Mammary epithelial cell (primary cell): ENCODE measurements at regions of chr7 and their contacts with region 1.

Region 1: GRCh38 chr7:96414931-96415292 is 93.0 kb upstream of the SLC25A13 start:
- DNase-seq: peak; percentile 18
- H3K4me3 ChIP-seq: no peak overlapping the region
- H3K27ac ChIP-seq: no peak overlapping the region
- H3K4me1 ChIP-seq: no peaks in the 10 kb centered on the region
- H3K27me3 ChIP-seq: no peaks in the 10 kb centered on the region
- CTCF ChIP-seq: peak; percentile 92 to 99

Region 2: DNA sequence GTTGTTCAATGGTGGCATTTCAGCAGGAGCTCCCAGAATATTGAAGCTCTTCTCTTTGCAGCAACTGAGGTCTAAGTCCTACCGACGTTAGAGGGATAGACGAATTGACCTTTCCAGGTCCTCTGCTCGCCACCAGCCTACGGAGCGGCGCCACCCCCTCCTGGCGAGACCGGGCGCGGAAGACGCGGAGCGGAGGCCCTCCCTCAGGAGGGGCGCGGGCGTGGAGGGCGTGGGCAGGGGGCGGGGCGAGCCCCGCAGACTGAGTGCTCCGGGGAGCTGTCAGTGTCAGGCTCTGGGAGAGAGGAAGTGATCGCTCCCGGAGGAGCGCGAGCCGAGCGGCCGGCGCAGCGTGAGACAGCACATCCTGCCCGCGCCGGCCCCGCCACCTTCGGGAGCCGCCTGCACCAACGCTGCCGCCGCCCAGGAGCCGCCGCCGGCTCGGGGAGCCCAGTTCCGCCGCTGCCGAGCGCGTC is 642.6 kb before region 1 on chr7 and contains the start of gene DYNC1I1:
- CTCF ChIA-PET with region 1: no interaction called
- dilution Hi-C with region 1: no loop called
- in situ Hi-C with region 1: no loop called
- intact Hi-C with region 1: no loop called
- DNase-seq: peak; percentile 73
- H3K4me3 ChIP-seq: peak within 1 kb of the TSS; percentile 42 to 59 (median 47)
- H3K27ac ChIP-seq: no peak within 1 kb of the TSS
- H3K4me1 ChIP-seq: no peaks in the 10 kb centered on the region
- H3K27me3 ChIP-seq: no peaks in the 10 kb centered on the region
- CTCF ChIP-seq: no peak
- total RNA-seq, gene DYNC1I1: 0.56 to 1.8 TPM

Region 3: GRCh38 chr7:96075510-96076349 is 339.2 kb before region 1 on chr7:
- CTCF ChIA-PET with region 1: no interaction called
- dilution Hi-C with region 1: no loop called
- in situ Hi-C with region 1: no loop called
- intact Hi-C with region 1: loop called (anchors 2 kb)
- DNase-seq: peak; percentile 26
- H3K4me3 ChIP-seq: peak overlapping the region; percentile 50 to 74 (median 61)
- H3K27ac ChIP-seq: no peak overlapping the region
- H3K4me1 ChIP-seq: peaks cover 12% of the 10 kb centered on the region
- H3K27me3 ChIP-seq: no peaks in the 10 kb centered on the region
- CTCF ChIP-seq: peak; percentile 79 to 91

Region 4: GRCh38 chr7:96179837-96180236 is 235.1 kb before region 1 on chr7:
- CTCF ChIA-PET with region 1: no interaction called
- dilution Hi-C with region 1: no loop called
- in situ Hi-C with region 1: no loop called
- intact Hi-C with region 1: loop called (anchors 1 kb)
- DNase-seq: no peak
- H3K4me3 ChIP-seq: no peak overlapping the region
- H3K27ac ChIP-seq: no peak overlapping the region
- H3K4me1 ChIP-seq: peaks cover 15% of the 10 kb centered on the region
- H3K27me3 ChIP-seq: no peaks in the 10 kb centered on the region
- CTCF ChIP-seq: peak in 1 of 2 donors; percentile 15

Region 5: GRCh38 chr7:96449094-96449493 is 34.2 kb after region 1 on chr7:
- CTCF ChIA-PET with region 1: no interaction called
- dilution Hi-C with region 1: no loop called
- in situ Hi-C with region 1: no loop called
- intact Hi-C with region 1: no loop called
- DNase-seq: no peak
- H3K4me3 ChIP-seq: no peak overlapping the region
- H3K27ac ChIP-seq: no peak overlapping the region
- H3K4me1 ChIP-seq: no peaks in the 10 kb centered on the region
- H3K27me3 ChIP-seq: peaks cover 7% of the 10 kb centered on the region
- CTCF ChIP-seq: no peak

Region 6: GRCh38 chr7:96800824-96801223 is 385.9 kb after region 1 on chr7:
- CTCF ChIA-PET with region 1: no interaction called
- dilution Hi-C with region 1: no loop called
- in situ Hi-C with region 1: no loop called
- intact Hi-C with region 1: loop called (anchors 2 kb)
- DNase-seq: peak; percentile 62
- H3K4me3 ChIP-seq: no peak overlapping the region
- H3K27ac ChIP-seq: no peak overlapping the region
- H3K4me1 ChIP-seq: no peaks in the 10 kb centered on the region
- H3K27me3 ChIP-seq: no peaks in the 10 kb centered on the region
- CTCF ChIP-seq: peak; percentile 3 to 51

Region 7: GRCh38 chr7:96870156-96870555 is 455.2 kb after region 1 on chr7:
- CTCF ChIA-PET with region 1: no interaction called
- dilution Hi-C with region 1: no loop called
- in situ Hi-C with region 1: no loop called
- intact Hi-C with region 1: loop called (anchors 5 kb)
- DNase-seq: peak; percentile 68
- H3K4me3 ChIP-seq: no peak overlapping the region
- H3K27ac ChIP-seq: peak overlapping the region; percentile 42
- H3K4me1 ChIP-seq: peaks cover 19% of the 10 kb centered on the region
- H3K27me3 ChIP-seq: no peaks in the 10 kb centered on the region
- CTCF ChIP-seq: no peak

Region 8: GRCh38 chr7:96962221-96962885 is 547.4 kb after region 1 on chr7:
- CTCF ChIA-PET with region 1: no interaction called
- dilution Hi-C with region 1: no loop called
- in situ Hi-C with region 1: no loop called
- intact Hi-C with region 1: no loop called
- DNase-seq: no peak
- H3K4me3 ChIP-seq: no peak overlapping the region
- H3K27ac ChIP-seq: no peak overlapping the region
- H3K4me1 ChIP-seq: no peaks in the 10 kb centered on the region
- H3K27me3 ChIP-seq: no peaks in the 10 kb centered on the region
- CTCF ChIP-seq: no peak